A549 (cell line): ENCODE measurements at regions of chr14 and their contacts with region 1.

Region 1: GRCh38 chr14:102694530-102695166 is 82.6 kb upstream of the TRAF3 start:
- DNase-seq: peak; percentile 73 to 82
- ATAC-seq: peak; percentile 72 to 78
- H3K4me3 ChIP-seq: no peak overlapping the region
- H3K27ac ChIP-seq: no peak overlapping the region; a peak in 1 of 6 replicates
- H3K4me1 ChIP-seq: peaks cover 51% of the 10 kb centered on the region
- CTCF ChIP-seq: peak; percentile 79
- EP300 ChIP-seq: no peak
- POLR2A ChIP-seq: no peak
- RAD21 ChIP-seq: peak; percentile 75 to 79

Region 2: DNA sequence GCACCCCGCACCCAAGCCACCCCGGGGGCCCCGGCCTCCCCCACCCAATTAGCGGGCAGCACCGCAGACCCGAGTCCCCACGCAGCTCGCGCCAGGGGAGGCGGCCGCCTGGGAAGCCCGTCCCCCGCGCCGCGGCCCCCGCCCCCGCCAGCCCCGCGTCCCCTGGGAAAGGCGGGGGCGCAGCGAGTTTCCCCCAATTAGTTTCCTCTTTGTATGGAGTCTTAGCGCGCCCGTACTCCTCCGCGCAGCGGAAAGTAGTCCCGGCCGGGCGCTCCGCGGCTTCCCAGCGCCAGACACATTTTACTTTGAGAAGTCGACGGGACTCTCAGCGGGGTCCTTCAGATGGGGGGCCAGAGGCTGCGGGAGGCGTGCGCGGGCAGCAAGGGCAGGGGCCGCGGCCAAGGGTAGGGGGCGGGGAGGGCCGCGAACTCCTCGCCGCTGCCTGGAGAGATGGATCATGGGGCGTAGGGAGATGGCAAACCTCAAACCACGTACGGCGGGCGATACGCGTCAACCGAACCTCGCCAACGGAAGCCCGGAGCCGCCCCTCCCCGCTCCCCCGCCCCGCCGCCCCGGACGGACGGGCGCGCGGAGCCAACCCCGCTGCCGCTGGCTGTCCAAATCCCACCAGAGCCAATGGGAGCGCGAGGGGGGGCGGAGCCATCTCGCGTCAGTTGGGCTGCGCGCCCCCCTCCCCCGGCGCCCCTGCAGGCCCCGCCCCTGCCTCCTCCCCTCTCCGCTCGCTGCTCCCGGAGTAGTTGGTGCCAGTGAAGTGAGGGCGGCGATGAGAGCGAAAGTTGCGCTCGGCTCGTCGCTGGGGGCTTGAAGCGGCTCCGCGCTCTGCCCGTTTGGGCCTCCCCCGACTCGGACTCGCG is 102.5 kb before region 1 on chr14 and contains the start of gene RCOR1:
- CTCF ChIA-PET with region 1: interaction called, 21 read pairs
- POLR2A ChIA-PET with region 1: no interaction called
- DNase-seq: peak; percentile 95 to 97
- ATAC-seq: peak; percentile 74 to 88
- H3K4me3 ChIP-seq: peak within 1 kb of the TSS; percentile 85
- H3K27ac ChIP-seq: peak within 1 kb of the TSS; percentile 96 to 98
- H3K4me1 ChIP-seq: peaks cover 36% of the 10 kb centered on the region
- CTCF ChIP-seq: no peak
- EP300 ChIP-seq: peak in 1 of 2 experiments; percentile 45; a peak in 1 of 5 replicates
- POLR2A ChIP-seq: peak; percentile 95
- RAD21 ChIP-seq: no peak
- polyA plus RNA-seq, gene RCOR1: 24.7 and 25.5 TPM in 2 replicates

Region 3: DNA sequence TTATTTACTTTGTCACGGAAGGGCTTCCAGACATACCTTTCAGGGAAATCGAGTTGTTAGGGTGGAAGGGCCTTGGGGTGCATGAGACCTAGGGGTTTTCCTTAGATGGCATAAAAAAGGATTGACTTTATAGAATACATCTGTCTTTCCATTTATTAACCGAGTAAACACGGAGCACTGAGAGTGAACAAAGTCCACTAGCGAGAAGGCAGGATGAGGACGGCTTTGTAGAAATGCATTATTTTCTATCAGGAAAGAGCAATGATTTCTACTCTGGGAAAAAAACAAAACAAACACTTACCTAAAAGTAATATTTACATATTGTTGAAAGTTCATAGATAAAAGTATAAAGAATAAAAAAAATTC is 10.4 kb before region 1 on chr14:
- CTCF ChIA-PET with region 1: interaction called, 23 read pairs
- POLR2A ChIA-PET with region 1: no interaction called
- DNase-seq: no peak
- ATAC-seq: peak in 1 of 2 experiments; percentile 35; a peak in 2 of 6 replicates
- H3K4me3 ChIP-seq: no peak overlapping the region
- H3K27ac ChIP-seq: peak overlapping the region; percentile 30 to 72; a peak in 5 of 6 replicates
- H3K4me1 ChIP-seq: peaks cover 18% of the 10 kb centered on the region
- CTCF ChIP-seq: no peak
- EP300 ChIP-seq: no peak
- POLR2A ChIP-seq: no peak
- RAD21 ChIP-seq: no peak

Region 4: DNA sequence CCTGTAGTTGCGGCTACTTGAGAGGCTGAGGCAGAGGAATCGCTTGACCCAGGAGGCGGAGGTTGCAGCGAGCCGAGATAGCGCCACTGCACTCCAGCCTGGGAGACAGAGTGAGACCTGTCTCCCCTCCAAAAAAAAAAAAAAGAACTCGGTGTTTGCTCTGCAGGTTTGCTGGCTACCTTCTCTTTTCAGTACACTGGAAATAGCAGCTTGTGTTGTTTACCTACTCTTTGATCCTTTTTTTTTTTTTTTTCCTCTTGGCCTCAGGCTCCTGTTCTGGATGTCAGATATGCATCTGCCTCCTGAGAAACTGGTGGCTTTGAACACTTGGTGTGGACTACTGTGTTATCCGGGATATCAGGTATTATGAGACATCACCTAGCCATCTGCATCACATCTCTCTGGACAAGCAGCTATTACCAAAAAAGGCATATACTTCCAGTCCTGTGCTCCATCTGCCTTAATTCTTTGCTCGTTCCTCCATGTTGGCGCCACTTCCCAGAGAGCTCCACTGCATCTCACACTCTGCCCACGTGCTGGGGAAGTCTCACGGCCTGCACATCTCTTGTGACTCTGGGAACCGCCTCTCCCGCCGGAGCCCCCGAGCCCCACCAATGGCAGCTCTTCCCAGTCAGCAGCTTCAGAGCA is 31.7 kb after region 1 on chr14:
- CTCF ChIA-PET with region 1: interaction called, 14 read pairs
- POLR2A ChIA-PET with region 1: no interaction called
- DNase-seq: no peak
- ATAC-seq: no peak
- H3K4me3 ChIP-seq: no peak overlapping the region
- H3K27ac ChIP-seq: no peak overlapping the region
- H3K4me1 ChIP-seq: no peaks in the 10 kb centered on the region
- CTCF ChIP-seq: no peak
- EP300 ChIP-seq: no peak
- POLR2A ChIP-seq: no peak
- RAD21 ChIP-seq: no peak

Region 5: DNA sequence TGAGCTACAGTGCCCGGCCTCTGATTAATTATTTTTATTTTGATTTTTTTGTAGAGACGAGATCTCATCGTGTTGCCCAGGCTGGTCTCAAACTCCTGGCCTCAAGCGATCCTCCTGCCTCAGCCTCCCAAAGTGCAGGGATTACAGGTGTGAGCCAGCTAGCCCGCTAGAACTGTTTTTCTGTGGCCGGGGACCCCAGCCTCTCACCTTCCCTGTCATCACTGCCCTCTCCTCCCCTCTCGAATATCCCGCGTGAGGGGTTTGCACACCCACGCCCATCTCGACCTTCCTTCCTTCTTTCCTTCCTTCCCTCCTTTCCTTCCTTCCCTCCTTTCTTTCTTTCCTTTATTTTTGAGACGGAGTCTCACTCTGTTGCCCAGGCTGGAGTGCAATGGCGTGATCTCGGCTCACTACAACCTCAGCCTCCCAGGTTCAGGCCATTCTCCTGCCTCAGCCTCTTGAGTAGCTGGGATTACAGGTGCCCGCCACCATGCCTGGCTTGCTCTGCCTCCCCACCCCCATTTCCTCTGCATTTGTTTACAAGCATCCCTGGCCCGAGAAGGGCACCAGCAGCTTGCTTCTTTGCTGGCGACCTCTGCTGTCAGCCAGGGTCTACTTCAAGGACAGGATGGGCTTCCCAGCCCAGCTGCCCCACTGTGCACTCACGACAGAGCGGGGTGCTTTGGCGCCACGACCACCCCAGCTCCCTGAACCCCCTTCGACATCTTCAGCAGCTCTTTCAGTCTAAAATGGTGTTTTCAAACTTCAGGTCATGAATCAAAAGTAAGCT is 78.3 kb after region 1 on chr14:
- CTCF ChIA-PET with region 1: interaction called, 19 read pairs
- POLR2A ChIA-PET with region 1: no interaction called
- DNase-seq: peak in 1 of 2 experiments; percentile 51
- ATAC-seq: peak in 1 of 2 experiments; percentile 33; a peak in 2 of 6 replicates
- H3K4me3 ChIP-seq: no peak overlapping the region
- H3K27ac ChIP-seq: no peak overlapping the region
- H3K4me1 ChIP-seq: peaks cover 19% of the 10 kb centered on the region
- CTCF ChIP-seq: peak; percentile 37
- EP300 ChIP-seq: no peak
- POLR2A ChIP-seq: no peak
- RAD21 ChIP-seq: peak in 1 of 2 experiments; percentile 48; a peak in 2 of 5 replicates

Region 6: DNA sequence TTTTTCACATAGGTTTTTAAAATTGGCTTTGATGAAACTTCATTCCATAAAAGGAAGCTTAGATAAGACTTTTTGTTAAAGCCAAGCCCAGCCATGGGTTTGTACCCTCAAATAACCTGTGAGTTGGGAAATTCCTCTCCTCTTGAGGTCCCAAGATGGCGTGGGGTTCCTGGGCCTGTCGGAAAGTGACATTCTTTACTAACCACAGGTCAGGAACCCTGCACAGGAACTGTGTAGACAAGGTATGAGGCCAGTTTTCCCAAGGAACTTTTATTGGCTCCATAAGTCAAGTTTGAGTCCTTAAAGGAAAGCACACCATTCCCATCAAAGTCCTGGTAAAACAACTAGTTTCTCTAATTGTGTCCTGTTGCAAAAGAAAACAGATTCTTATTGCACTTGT is 162.8 kb after region 1 on chr14:
- CTCF ChIA-PET with region 1: no interaction called
- POLR2A ChIA-PET with region 1: no interaction called
- DNase-seq: no peak
- ATAC-seq: no peak
- H3K4me3 ChIP-seq: no peak overlapping the region
- H3K27ac ChIP-seq: no peak overlapping the region
- H3K4me1 ChIP-seq: no peaks in the 10 kb centered on the region
- CTCF ChIP-seq: no peak
- EP300 ChIP-seq: no peak
- POLR2A ChIP-seq: no peak
- RAD21 ChIP-seq: no peak

Region 7: DNA sequence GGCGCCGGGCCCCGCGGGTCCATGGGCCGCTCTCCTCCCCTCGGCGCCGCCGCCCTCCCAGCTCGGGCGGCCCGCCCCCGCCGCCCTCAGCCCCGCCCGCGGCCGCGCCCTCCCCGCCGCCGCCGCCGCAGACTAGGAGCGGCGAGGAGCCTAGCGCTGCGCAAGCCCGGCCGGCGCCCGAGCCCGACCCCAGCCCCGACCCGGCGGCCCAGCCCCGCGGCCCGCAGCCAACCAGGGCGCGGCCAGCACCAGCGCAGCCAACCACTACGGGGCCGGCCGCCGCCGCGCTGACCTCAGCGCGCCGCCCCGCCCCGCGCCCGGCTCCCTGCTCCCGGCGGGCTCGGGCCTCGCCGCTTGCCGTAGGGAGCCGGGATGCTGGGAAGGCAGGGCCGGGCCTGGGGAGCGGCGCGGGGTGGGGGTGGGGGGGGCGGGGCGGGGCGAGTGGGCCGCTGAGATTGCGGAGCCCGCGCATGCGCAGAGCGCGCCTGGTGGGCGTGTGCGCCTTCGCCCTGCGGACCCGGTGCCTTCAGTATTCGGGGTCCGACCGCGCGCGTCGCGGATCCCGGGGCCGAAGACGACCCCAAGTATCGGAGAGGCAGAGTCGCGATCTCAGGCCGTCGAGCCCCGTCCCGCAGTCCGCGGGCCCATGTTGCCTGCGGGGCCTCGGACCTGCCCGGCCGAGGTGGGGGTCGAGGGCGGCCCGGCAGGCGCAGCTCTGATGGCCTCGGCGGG is 362.9 kb after region 1 on chr14 and contains the start of gene CDC42BPB:
- CTCF ChIA-PET with region 1: no interaction called
- POLR2A ChIA-PET with region 1: no interaction called
- DNase-seq: peak; percentile 75 to 92
- ATAC-seq: peak; percentile 91 to 95
- H3K4me3 ChIP-seq: peak within 1 kb of the TSS; percentile 97
- H3K27ac ChIP-seq: peak within 1 kb of the TSS; percentile 97 to 98
- H3K4me1 ChIP-seq: peaks cover 38% of the 10 kb centered on the region
- CTCF ChIP-seq: no peak
- EP300 ChIP-seq: no peak
- POLR2A ChIP-seq: peak; percentile 68
- RAD21 ChIP-seq: no peak
- polyA plus RNA-seq, gene CDC42BPB: 57.1 and 105 TPM in 2 replicates